WTC11 (cell line): ENCODE measurements at regions of chr14 and their contacts with region 1.

Region 1: DNA sequence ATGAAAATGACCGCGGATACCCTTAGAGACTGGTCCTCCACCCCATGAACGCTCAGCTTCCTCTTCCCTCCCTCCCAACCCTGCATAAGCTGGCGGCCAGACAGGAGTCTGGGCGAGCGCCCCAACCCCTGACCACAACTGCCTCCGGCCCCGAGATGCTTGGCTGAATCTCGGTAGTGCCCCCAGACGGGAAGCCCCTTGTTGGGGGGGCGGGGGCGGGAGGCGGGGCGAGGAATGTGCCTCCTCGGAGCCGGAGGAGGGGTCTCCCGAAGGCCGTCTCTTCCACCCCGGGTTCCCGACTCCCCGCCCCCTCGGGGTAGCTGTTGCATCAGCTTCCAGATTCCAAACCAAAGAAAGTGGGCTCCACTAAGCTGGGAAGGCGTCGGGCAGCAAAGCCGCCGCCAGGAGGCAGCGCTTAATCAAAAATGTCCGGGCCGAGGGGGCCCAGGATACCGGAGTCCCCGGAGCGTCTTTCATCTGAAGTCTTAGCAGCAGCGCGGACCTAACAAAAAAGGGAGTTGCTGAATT is 7.1 kb upstream of the MRPL52 start:
- DNase-seq: peak; percentile 97
- ATAC-seq: peak; percentile 79
- H3K4me3 Mint-ChIP-seq: peak overlapping the region; percentile 77
- H3K27ac Mint-ChIP-seq: peak overlapping the region; percentile 78
- H3K4me1 Mint-ChIP-seq: peaks cover 57% of the 10 kb centered on the region
- H3K27me3 Mint-ChIP-seq: peaks cover 6% of the 10 kb centered on the region
- CTCF ChIP-seq: peak; percentile 67

Region 2: DNA sequence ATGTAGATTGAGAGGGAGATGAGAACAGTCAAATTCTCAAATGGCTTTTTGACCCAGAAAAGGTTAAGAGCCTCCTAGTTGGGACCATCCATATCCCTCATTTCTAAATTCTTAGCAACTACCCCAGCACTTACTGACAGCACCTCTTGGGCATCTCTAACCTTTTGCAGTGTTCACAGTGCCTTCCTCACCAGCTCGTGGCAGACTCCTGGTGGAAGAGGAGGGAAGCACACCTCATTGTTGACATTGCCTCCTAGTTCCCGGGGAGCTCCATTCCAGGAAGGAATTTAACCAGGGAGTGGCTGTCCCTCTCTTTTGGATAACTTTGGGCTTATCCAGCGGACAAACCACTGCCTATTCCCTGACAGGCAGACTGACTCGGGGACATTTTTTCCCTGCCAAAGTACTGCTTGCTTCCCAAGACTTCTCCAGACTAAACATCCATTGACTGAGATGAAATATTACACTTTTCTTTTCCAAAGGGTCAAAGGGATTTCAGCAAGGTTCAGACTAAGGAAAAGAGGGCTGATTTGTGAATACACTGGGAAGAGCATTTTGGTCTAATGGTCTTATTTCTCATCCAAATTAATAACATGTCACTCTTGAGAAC is 169.5 kb before region 1 on chr14:
- CTCF ChIA-PET with region 1: interaction called, 12 read pairs
- POLR2A ChIA-PET with region 1: interaction called, 3 read pairs
- DNase-seq: peak; percentile 86
- ATAC-seq: peak; percentile 99
- H3K4me3 Mint-ChIP-seq: no peak overlapping the region
- H3K27ac Mint-ChIP-seq: no peak overlapping the region
- H3K4me1 Mint-ChIP-seq: 0 out of 2 replicates have a peak, but pooled peaks cover 3% of the 10 kb centered on the region
- H3K27me3 Mint-ChIP-seq: no peaks in the 10 kb centered on the region; the same call in 1 of the 2 replicates
- CTCF ChIP-seq: peak; percentile 68

Region 3: GRCh38 chr14:22678221-22678620 is 144.4 kb before region 1 on chr14:
- CTCF ChIA-PET with region 1: no interaction called
- POLR2A ChIA-PET with region 1: no interaction called
- DNase-seq: no peak
- ATAC-seq: no peak
- H3K4me3 Mint-ChIP-seq: no peak overlapping the region
- H3K27ac Mint-ChIP-seq: no peak overlapping the region
- H3K4me1 Mint-ChIP-seq: peaks cover 9% of the 10 kb centered on the region; the same call in 1 of the 2 replicates
- H3K27me3 Mint-ChIP-seq: peaks cover 50% of the 10 kb centered on the region
- CTCF ChIP-seq: no peak

Region 4: DNA sequence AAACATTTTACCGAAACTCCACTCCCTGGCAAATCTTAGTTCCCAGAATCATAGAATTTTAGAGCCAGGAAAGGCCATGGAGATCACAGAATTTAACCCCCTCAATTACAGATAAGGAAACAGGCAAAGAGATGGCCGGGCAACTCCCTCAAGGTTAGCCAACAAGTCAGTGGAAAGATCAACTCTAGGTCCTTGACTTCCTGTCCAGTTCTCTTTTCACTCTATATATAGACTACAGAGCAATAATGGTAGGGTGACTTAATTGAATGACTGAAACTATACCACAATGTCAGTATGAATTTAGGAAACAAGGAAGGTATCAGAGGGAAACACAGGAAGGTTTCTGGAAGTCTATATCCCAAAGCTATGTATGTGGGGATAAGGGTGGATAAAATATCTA is 44.6 kb before region 1 on chr14:
- CTCF ChIA-PET with region 1: interaction called, 17 read pairs
- POLR2A ChIA-PET with region 1: interaction called, 4 read pairs
- DNase-seq: no peak
- ATAC-seq: no peak
- H3K4me3 Mint-ChIP-seq: no peak overlapping the region
- H3K27ac Mint-ChIP-seq: no peak overlapping the region
- H3K4me1 Mint-ChIP-seq: peaks cover 5% of the 10 kb centered on the region; the same call in 1 of the 2 replicates
- H3K27me3 Mint-ChIP-seq: no peaks in the 10 kb centered on the region
- CTCF ChIP-seq: no peak

Region 5: DNA sequence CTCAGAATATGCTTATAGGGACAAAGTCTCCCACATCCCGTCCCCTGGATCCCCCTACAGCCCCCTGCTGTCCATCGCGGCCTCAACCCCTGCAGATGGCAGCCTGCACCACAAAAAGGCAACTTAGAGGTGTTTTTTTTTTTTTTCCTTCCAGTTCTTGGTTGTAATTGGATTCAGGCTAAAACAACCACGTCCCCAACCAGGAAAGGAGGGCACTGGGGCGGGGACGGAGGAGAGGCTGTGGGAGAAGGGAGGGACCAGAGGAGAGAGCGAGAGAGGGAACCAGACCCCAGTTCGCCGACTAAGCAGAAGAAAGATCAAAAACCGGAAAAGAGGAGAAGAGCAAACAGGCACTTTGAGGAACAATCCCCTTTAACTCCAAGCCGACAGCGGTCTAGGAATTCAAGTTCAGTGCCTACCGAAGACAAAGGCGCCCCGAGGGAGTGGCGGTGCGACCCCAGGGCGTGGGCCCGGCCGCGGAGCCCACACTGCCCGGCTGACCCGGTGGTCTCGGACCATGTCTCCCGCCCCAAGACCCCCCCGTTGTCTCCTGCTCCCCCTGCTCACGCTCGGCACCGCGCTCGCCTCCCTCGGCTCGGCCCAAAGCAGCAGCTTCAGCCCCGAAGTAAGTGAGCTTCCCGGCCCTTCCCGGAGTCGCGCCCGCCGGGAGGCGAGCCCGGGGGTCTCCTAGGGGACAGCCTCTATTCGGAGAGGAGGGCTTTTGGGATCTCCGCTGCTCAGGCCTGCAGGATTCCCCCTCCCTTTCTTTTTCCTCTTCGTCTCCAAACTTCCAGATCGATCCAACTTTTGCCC is 13.9 kb after region 1 on chr14 and contains the start of gene MMP14:
- CTCF ChIA-PET with region 1: interaction called, 89 read pairs
- POLR2A ChIA-PET with region 1: interaction called, 81 read pairs
- DNase-seq: peak; percentile 62
- ATAC-seq: peak; percentile 66
- H3K4me3 Mint-ChIP-seq: peak within 1 kb of the TSS; percentile 100
- H3K27ac Mint-ChIP-seq: peak within 1 kb of the TSS; percentile 98
- H3K4me1 Mint-ChIP-seq: peaks cover 29% of the 10 kb centered on the region
- H3K27me3 Mint-ChIP-seq: no peaks in the 10 kb centered on the region; the same call in 1 of the 2 replicates
- CTCF ChIP-seq: no peak
- total RNA-seq, gene MMP14: 81.6 to 94.4 TPM (median 83.9 TPM) in 3 replicates

Region 6: GRCh38 chr14:22865424-22866405 is 43.1 kb after region 1 on chr14:
- CTCF ChIA-PET with region 1: interaction called, 38 read pairs
- POLR2A ChIA-PET with region 1: interaction called, 26 read pairs
- DNase-seq: peak; percentile 84
- ATAC-seq: peak; percentile 96
- H3K4me3 Mint-ChIP-seq: no peak overlapping the region
- H3K27ac Mint-ChIP-seq: peak overlapping the region; percentile 31; the same call in 1 of the 2 replicates
- H3K4me1 Mint-ChIP-seq: peaks cover 13% of the 10 kb centered on the region
- H3K27me3 Mint-ChIP-seq: no peaks in the 10 kb centered on the region
- CTCF ChIP-seq: peak; percentile 47

Region 7: GRCh38 chr14:22886500-22887259 is 64.0 kb after region 1 on chr14:
- CTCF ChIA-PET with region 1: interaction called, 12 read pairs
- POLR2A ChIA-PET with region 1: interaction called, 13 read pairs
- DNase-seq: peak; percentile 80
- ATAC-seq: peak; percentile 46
- H3K4me3 Mint-ChIP-seq: peak overlapping the region; percentile 88
- H3K27ac Mint-ChIP-seq: peak overlapping the region; percentile 97
- H3K4me1 Mint-ChIP-seq: peaks cover 41% of the 10 kb centered on the region
- H3K27me3 Mint-ChIP-seq: peaks cover 30% of the 10 kb centered on the region
- CTCF ChIP-seq: no peak

Region 8: DNA sequence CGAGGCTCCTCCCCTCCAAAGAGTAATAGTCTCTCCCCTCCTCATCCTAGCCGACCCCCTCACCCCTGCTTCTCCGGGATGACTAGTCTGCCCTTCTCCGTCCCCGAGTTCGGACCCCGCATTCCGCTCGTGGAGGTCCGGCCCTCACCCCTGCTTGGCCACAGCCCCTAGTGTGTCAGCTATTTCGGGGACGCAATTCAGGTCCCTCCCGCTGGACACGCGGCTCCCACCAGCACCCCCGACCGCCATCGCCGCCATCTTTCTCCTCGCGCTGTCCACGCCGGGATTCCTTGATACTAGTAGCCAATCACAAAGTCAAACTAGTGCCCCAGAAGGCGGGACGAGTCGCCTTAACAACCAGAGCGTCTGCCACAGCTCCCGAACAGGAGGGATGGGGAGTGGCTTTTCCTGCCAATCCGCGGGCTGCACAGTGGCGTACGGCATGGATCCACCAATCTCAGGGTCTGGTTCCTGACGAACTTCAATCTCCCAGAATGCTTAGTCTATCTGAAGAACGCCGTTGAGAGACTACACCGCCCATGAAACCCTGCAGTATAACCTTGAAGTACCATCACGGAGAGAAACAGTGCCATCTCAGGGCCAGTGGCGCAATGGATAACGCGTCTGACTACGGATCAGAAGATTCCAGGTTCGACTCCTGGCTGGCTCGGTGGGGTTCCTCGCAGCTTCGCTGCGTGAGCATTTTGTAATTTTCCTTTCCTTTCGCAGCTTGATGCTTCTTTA is 106.6 kb after region 1 on chr14 and contains the start of gene PRMT5:
- CTCF ChIA-PET with region 1: interaction called, 19 read pairs
- POLR2A ChIA-PET with region 1: interaction called, 7 read pairs
- DNase-seq: peak; percentile 97
- ATAC-seq: peak; percentile 96
- H3K4me3 Mint-ChIP-seq: no peak within 1 kb of the TSS
- H3K27ac Mint-ChIP-seq: no peak within 1 kb of the TSS; the same call in 1 of the 2 replicates
- H3K4me1 Mint-ChIP-seq: peaks cover 7% of the 10 kb centered on the region
- H3K27me3 Mint-ChIP-seq: no peaks in the 10 kb centered on the region
- CTCF ChIP-seq: no peak
- total RNA-seq, gene PRMT5: 119 to 124 TPM (median 123 TPM) in 3 replicates